ENCODE measurements at regions of chr20 and their contacts with region 1.

Region 1: DNA sequence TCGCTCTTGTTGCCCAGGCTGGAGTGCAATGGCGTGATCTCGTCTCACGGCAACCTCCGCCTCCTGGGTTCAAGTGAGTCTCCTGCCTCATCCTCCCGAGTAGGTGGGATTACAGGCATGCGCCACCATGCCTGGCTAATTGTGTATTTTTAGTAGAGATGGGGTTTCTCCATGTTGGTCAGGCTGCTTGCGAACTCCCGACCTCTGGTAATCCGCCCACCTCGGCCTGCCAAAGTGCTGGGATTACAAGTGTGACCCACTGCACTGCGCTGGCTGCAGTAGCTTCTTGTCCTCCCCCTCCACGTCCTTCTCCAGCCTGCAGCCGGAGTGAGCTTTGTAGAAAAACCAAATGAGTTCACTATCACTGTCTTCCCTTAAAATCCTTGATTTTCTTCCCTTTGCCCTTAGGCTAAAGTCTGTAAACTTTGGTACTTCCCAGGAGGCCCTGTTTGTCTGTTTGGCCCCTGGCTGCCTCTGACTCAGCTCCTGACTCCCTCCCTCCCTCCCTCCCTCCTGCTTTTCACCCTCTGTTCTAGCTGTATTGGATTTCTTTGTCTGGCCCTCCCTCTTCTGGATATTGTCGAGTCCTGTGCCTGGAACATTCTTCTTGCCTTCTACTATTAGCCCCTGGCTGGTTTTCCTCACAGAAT is 12.9 kb downstream of the PARD6B start:
- DNase-seq: peak; percentile 88
- H3K4me3 Mint-ChIP-seq: peak overlapping the region; percentile 35
- H3K27ac Mint-ChIP-seq: peak overlapping the region; percentile 51
- H3K4me1 Mint-ChIP-seq: peaks cover 26% of the 10 kb centered on the region
- H3K27me3 Mint-ChIP-seq: no peaks in the 10 kb centered on the region
- CTCF ChIP-seq: peak; percentile 34

Region 2: DNA sequence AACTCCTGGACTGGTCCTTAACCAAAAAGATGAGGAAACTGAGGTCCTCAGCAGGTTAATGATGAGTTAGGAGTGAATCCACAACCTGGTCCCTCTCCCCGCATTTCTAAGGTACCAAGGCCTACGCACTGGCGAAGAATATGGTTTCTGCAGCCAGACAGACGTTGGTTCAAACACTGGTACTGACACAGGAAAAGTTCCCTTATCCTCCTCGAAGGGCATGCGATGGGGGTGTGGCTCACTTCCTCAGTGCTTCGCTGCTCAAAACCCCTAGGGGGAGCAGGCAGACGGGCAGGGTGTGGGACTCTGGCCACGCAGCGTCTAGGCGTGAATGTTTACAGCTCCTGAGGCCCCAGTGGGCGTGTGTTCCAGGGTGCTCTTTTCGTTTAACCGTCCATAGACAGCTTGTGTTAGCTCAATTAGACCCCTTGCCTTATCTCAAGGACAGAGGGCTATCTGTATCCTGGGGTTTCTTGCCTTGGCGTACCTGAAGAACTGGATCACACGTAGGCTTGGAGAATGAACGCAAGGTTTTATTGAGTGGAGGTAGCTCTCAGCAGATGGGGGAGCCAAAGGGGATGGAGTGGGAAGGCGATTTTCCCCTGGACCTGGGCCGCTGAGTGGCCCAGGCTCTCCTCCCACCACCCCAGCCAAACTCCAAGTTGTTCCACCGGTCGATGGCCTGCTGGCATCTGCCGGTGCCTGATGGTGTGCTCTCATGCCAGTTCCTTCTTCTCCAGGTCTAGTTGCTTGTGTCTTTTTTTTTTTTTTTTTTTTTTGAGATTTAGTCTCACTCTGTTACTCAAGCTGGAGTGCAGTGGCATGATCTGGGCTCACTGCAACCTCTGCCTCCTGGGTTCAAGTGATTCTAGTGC is 265.9 kb before region 1 on chr20:
- CTCF ChIA-PET with region 1: interaction called, 4 read pairs
- POLR2A ChIA-PET with region 1: interaction called, 4 read pairs
- intact Hi-C with region 1: loop called (anchors 10 kb)
- DNase-seq: peak; percentile 79
- H3K4me3 Mint-ChIP-seq: no peak overlapping the region
- H3K27ac Mint-ChIP-seq: no peak overlapping the region
- H3K4me1 Mint-ChIP-seq: peaks cover 7% of the 10 kb centered on the region
- H3K27me3 Mint-ChIP-seq: no peaks in the 10 kb centered on the region
- CTCF ChIP-seq: peak; percentile 71

Region 3: DNA sequence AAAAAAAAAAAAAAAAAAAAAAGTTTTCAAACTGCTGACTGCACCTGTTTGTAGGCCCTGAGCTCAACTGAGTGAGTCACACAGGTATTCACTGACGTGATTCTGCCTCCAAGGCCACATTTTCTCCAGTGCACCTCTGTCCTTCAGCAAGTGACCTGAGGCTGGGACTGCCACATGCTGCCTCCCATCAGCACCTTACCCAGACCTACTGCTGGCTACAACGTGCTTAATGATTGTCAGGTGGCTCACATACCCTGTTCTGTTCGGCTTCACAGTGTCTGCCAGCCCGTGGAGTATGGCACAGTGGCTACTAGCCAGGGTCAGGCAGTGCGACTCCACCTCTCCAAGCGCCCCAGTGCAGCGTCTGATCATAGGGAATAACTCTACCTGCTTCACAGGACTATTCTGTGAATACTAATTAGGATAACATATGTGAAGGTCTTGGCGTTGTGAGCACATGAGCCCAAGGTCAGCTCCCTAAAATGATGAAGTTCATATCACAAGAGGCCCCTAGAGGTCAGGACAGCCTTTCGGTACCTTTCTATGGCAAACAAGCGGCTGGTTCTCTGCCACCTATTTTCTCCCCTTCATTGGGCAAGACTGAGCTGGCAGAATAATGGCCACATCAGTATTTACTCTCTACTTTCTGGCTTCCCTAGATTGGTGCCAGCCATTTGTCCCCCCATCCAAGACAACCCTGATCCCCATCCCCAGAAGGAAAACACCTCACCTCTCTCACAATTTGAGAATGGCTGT is 81.0 kb before region 1 on chr20:
- CTCF ChIA-PET with region 1: interaction called, 71 read pairs
- POLR2A ChIA-PET with region 1: interaction called, 31 read pairs
- intact Hi-C with region 1: loop called (anchors 1 kb)
- DNase-seq: peak; percentile 84
- H3K4me3 Mint-ChIP-seq: no peak overlapping the region
- H3K27ac Mint-ChIP-seq: peak overlapping the region; percentile 53
- H3K4me1 Mint-ChIP-seq: peaks cover 21% of the 10 kb centered on the region
- H3K27me3 Mint-ChIP-seq: no peaks in the 10 kb centered on the region
- CTCF ChIP-seq: peak; percentile 60

Region 4: DNA sequence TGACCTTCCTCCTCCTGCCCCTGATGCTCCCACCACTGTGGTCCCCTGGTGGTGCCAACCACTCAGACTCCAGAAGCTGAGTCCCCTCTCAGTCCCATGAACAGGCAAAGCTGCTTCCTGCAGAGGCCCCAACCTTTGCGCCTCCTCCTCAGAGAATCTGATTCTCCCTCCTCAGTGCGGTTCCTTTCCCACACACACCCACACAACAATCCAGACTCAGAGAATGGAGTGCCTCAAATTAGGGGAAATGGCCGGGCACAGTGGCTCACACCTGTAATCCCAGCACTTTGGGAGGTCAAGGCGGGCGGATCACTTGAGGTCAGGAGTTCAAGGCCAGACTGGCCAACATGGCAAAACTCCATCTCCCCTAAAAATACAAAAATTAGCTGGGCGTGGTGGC is 75.9 kb before region 1 on chr20:
- CTCF ChIA-PET with region 1: interaction called, 71 read pairs
- POLR2A ChIA-PET with region 1: interaction called, 31 read pairs
- intact Hi-C with region 1: loop called (anchors 1 kb)
- DNase-seq: no peak
- H3K4me3 Mint-ChIP-seq: no peak overlapping the region
- H3K27ac Mint-ChIP-seq: no peak overlapping the region
- H3K4me1 Mint-ChIP-seq: peaks cover 5% of the 10 kb centered on the region
- H3K27me3 Mint-ChIP-seq: no peaks in the 10 kb centered on the region
- CTCF ChIP-seq: no peak

Region 5: DNA sequence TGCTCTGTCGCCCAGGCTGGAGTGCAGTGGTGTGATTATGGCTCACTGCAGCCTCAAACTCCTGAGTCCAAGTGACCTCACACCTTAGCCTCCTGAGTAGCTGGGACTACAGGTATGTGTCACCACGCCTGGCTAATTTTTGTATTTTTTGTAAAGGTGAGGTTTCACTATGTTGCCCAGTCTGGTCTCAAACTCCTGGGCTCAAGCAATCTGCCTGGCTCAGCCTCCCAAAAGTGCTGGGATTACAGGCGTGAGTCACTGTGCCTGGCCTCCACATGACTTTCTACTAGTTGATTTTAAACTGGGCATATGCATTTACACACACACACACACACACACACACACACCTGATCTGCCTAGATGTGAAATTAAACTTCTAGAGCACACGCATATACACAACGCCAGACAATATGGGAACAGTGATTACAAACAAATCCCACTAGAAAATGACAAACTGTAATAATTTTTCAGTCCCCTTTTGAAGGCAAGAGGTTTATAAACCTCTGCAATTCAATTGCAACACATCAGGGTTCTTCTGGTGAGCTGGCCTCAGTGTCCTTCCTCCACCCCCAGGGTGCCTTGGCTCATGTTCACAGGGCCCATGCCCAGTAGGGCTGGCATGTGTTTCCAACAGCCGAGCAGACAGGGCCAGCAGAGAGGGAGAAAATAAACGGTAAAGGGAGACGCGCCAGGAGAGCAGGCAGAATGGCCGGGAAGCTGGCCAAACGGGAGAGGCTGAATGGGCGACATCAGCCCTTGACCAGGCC is 18.4 kb after region 1 on chr20:
- CTCF ChIA-PET with region 1: interaction called, 32 read pairs
- POLR2A ChIA-PET with region 1: interaction called, 15 read pairs
- intact Hi-C with region 1: no loop called
- DNase-seq: peak; percentile 94
- H3K4me3 Mint-ChIP-seq: peak overlapping the region; percentile 61
- H3K27ac Mint-ChIP-seq: peak overlapping the region; percentile 89
- H3K4me1 Mint-ChIP-seq: peaks cover 27% of the 10 kb centered on the region
- H3K27me3 Mint-ChIP-seq: no peaks in the 10 kb centered on the region
- CTCF ChIP-seq: no peak

Region 6: DNA sequence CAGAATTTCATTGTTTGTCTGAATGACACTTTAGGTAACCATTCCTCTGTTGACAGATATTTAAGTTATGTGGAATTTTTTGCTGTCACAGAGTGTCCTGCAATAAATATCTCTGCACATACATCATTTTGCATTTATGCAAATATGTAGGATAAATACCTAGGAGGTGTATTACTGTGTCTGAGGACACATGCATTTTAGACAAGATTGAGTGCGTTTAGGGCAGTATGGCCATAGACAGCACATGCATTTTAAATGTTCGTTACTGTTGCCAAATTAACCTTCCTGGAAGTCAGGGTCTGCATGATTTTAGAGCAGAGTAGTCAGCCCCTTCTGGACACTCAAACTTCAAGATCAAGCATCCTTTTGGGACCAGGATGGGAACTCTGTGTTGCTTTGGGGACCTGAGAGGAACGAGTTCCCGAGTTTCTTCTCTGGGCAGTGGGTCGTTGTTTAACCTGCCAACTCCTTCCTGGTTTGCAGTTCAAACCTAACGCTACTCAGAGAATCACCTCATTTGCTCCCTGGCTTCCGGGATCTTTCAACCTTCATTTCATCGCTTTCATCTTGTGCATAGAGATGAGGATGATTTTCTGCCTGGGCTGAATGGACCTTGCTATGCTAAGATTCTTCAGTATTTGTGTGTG is 60.3 kb after region 1 on chr20:
- CTCF ChIA-PET with region 1: no interaction called
- POLR2A ChIA-PET with region 1: no interaction called
- intact Hi-C with region 1: no loop called
- DNase-seq: no peak
- H3K4me3 Mint-ChIP-seq: no peak overlapping the region
- H3K27ac Mint-ChIP-seq: no peak overlapping the region
- H3K4me1 Mint-ChIP-seq: no peaks in the 10 kb centered on the region
- H3K27me3 Mint-ChIP-seq: no peaks in the 10 kb centered on the region
- CTCF ChIP-seq: no peak

Measured in MCF 10A (cell line).